SK-N-SH (cell line): ENCODE measurements at regions of chr2 and their contacts with region 1.

Region 1: GRCh38 chr2:85728883-85729824 is 24.6 kb upstream of the ATOH8 start:
- DNase-seq: peak; percentile 90
- H3K4me3 ChIP-seq: peak overlapping the region in 1 of 2 experiments; percentile 47; a peak in 1 of 4 replicates
- H3K27ac ChIP-seq: no peak overlapping the region
- H3K4me1 ChIP-seq: peaks cover 0 to 11% of the 10 kb centered on the region in 2 experiments; a peak in 1 of 4 replicates
- H3K27me3 ChIP-seq: no peaks in the 10 kb centered on the region
- CTCF ChIP-seq: peak; percentile 97
- EP300 ChIP-seq: no peak
- RAD21 ChIP-seq: peak; percentile 99

Region 2: GRCh38 chr2:85551698-85552678 is 177.2 kb before region 1 on chr2:
- CTCF ChIA-PET with region 1: no interaction called
- POLR2A ChIA-PET with region 1: no interaction called
- DNase-seq: peak; percentile 73
- H3K4me3 ChIP-seq: no peak overlapping the region
- H3K27ac ChIP-seq: no peak overlapping the region
- H3K4me1 ChIP-seq: peaks cover 0 to 13% of the 10 kb centered on the region in 2 experiments; a peak in 2 of 4 replicates
- H3K27me3 ChIP-seq: no peaks in the 10 kb centered on the region
- CTCF ChIP-seq: peak; percentile 94
- EP300 ChIP-seq: no peak
- RAD21 ChIP-seq: peak; percentile 97

Region 3: DNA sequence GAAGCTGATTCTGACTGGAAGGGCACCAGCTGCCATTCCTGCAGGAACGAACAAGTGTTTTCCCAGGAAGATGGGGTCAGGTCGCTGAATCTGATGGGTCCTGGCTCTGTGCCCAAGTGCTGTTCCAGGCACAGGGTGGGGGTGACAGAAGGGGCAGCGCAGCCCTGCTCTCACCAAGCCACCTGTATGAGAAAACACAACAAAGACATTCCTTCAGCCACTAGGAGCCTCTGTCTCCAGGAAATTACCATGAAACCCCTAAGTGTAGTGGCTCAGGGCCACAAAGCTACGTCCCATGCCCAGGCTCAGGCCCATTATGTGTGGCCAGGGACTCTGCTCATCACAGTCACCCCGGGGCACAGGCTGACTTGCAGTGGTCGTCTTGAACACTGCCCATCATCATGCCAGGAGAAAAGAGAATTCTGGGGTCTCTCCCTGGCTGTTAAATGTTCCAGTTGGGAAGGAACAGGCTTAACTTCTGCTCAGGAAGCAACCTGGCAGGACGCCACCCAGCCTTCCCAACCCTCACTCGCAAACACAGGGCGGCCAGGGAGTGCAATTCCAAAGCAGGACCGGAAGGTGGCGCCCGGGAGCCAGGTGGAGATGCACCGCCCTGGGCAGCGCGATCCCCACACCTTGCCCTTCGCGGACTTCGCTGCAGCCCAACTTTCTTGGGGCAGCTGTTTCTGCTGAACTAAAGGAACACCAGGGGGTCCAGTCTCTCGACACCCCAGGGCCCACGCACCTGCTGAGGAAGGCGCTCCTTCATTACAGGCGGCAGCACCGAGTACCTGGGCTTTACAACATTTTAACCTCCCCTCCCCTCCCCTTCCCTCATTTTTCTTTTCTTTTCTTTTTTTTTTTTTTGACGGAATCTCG is 50.1 kb before region 1 on chr2:
- CTCF ChIA-PET with region 1: interaction called, 13 read pairs
- POLR2A ChIA-PET with region 1: no interaction called
- DNase-seq: peak; percentile 92
- H3K4me3 ChIP-seq: no peak overlapping the region
- H3K27ac ChIP-seq: no peak overlapping the region
- H3K4me1 ChIP-seq: peaks cover 0 to 7% of the 10 kb centered on the region in 2 experiments; a peak in 1 of 4 replicates
- H3K27me3 ChIP-seq: no peaks in the 10 kb centered on the region
- CTCF ChIP-seq: peak; percentile 93
- EP300 ChIP-seq: no peak
- RAD21 ChIP-seq: peak; percentile 82

Region 4: GRCh38 chr2:85750587-85751575 is 21.7 kb after region 1 on chr2:
- CTCF ChIA-PET with region 1: interaction called, 168 read pairs
- POLR2A ChIA-PET with region 1: no interaction called
- DNase-seq: peak; percentile 82
- H3K4me3 ChIP-seq: no peak overlapping the region
- H3K27ac ChIP-seq: no peak overlapping the region
- H3K4me1 ChIP-seq: peaks cover 21 to 32% of the 10 kb centered on the region in 2 experiments; a peak in 3 of 4 replicates
- H3K27me3 ChIP-seq: no peaks in the 10 kb centered on the region
- CTCF ChIP-seq: peak; percentile 88
- EP300 ChIP-seq: no peak
- RAD21 ChIP-seq: peak; percentile 89

Region 5: DNA sequence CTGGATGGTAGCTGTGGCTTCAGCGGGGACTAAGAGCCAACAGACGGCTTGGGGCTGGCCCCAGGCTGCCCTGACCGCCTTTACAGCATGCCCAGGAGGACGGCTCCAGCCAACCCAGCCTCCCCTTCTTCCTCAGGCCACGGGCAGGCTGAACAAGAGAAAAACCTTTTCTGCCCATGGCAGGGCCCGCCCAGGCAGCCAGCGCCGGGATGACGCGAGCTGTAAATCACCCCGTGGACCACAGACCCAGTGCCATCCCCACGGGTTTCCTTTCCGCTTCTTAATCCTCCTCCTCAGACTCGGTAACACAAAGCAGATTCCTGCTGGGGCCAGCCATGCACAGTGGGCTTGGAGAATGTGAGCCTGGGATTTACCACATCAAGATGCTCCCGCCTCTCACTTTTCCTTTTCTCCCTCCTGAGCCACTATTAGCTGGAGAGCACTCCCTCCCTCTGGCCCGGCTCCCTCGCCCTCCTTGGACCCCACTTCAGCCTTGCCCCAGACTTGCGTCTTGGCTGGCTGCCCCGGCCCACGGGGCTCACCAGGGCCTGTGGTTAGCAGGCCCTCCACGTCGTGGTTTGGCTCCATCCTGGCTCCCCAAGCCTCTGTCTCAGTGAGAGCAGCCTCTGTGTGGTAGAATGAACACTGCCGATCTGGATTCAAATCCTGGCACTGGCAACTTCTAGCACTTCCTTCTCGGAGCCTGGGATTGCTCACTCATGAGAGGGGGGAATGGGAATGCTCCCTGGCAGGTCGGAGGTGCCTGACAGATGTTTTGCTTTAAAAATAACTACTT is 56.1 kb after region 1 on chr2:
- CTCF ChIA-PET with region 1: interaction called, 12 read pairs
- POLR2A ChIA-PET with region 1: no interaction called
- DNase-seq: no peak
- H3K4me3 ChIP-seq: no peak overlapping the region
- H3K27ac ChIP-seq: peak overlapping the region in 1 of 2 experiments; percentile 15; a peak in 1 of 4 replicates
- H3K4me1 ChIP-seq: peaks cover 7 to 13% of the 10 kb centered on the region in 2 experiments; a peak in 3 of 4 replicates
- H3K27me3 ChIP-seq: no peaks in the 10 kb centered on the region
- CTCF ChIP-seq: no peak
- EP300 ChIP-seq: peak in 1 of 2 experiments; percentile 78; a peak in 1 of 4 replicates
- RAD21 ChIP-seq: no peak

Region 6: DNA sequence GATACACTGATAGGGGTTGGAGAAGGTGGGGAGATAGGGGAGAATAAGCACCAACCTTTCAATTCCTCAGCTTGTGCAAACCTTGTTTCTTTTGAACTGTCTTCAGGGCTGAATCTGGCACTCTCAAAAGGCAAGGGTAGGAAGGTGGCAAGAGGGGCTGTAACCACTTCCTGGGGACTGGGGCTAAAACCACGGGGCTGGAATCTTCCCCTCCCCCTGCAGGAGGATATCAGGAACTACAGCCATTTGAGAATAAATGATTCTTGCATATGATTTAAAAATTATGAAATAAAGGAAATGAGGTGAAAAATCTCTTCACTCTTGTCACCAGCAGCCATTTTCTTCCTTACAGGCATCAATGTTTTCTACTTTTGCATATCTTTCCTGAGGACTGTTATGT is 75.4 kb after region 1 on chr2:
- CTCF ChIA-PET with region 1: interaction called, 626 read pairs
- POLR2A ChIA-PET with region 1: no interaction called
- DNase-seq: peak; percentile 70
- H3K4me3 ChIP-seq: no peak overlapping the region
- H3K27ac ChIP-seq: no peak overlapping the region
- H3K4me1 ChIP-seq: peaks cover 2 to 5% of the 10 kb centered on the region in 2 experiments; a peak in 1 of 4 replicates
- H3K27me3 ChIP-seq: no peaks in the 10 kb centered on the region
- CTCF ChIP-seq: peak; percentile 62
- EP300 ChIP-seq: no peak
- RAD21 ChIP-seq: peak; percentile 54